ENCODE measurements at regions of chr6 and their contacts with region 1.

Region 1: GRCh38 chr6:138588805-138589434 is 89.6 kb upstream of the NHSL1 start:
- DNase-seq: peak; percentile 30
- H3K4me3 Mint-ChIP-seq: no peak overlapping the region
- H3K27ac Mint-ChIP-seq: no peak overlapping the region
- H3K4me1 Mint-ChIP-seq: peaks cover 38% of the 10 kb centered on the region
- H3K27me3 Mint-ChIP-seq: peaks cover 3% of the 10 kb centered on the region

Region 2: DNA sequence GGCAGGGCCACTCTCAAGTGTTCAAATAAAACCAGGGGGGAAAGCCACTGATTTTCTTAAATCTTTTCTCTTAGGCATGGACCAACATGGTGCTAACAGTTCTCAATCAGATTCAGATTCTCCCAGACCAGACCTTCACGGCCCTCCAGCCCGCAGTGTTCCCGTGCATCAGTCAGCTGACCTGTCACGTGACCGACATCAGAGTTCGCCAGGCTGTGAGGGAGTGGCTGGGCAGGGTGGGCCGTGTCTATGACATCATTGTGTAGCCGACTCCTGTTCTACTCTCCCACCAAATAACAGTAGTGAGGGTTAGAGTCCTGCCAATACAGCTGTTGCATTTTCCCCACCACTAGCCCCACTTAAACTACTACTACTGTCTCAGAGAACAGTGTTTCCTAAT is 252.7 kb before region 1 on chr6:
- intact Hi-C with region 1: no loop called
- DNase-seq: no peak
- H3K4me3 Mint-ChIP-seq: no peak overlapping the region
- H3K27ac Mint-ChIP-seq: no peak overlapping the region
- H3K4me1 Mint-ChIP-seq: no peaks in the 10 kb centered on the region
- H3K27me3 Mint-ChIP-seq: peaks cover 18% of the 10 kb centered on the region

Region 3: GRCh38 chr6:138428944-138429598 is 159.8 kb before region 1 on chr6:
- intact Hi-C with region 1: loop called (anchors 1 kb)
- DNase-seq: no peak
- H3K4me3 Mint-ChIP-seq: no peak overlapping the region
- H3K27ac Mint-ChIP-seq: no peak overlapping the region
- H3K4me1 Mint-ChIP-seq: no peaks in the 10 kb centered on the region
- H3K27me3 Mint-ChIP-seq: peaks cover 3% of the 10 kb centered on the region

Region 4: DNA sequence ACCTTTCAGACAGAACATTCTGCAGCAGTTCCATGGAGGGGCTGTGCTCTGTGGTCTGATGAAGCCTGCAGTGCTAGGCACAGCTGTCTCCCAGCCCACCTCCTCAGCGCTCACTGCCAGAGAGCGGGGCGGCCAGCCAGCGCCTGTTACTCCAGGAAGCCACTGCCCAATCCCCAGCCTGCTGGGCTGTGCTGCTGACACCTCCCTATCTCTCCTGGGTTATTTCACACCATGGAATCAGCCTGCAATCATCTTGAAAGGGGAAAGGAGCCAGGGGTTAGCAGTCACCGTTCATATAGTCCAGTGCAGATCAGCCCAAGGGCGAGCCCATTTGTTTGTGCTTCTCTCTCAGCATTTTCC is 43.3 kb before region 1 on chr6:
- intact Hi-C with region 1: no loop called
- DNase-seq: no peak
- H3K4me3 Mint-ChIP-seq: no peak overlapping the region
- H3K27ac Mint-ChIP-seq: no peak overlapping the region
- H3K4me1 Mint-ChIP-seq: peaks cover 16% of the 10 kb centered on the region
- H3K27me3 Mint-ChIP-seq: peaks cover 25% of the 10 kb centered on the region

Region 5: GRCh38 chr6:138654715-138655634 is 66.1 kb after region 1 on chr6:
- intact Hi-C with region 1: loop called (anchors 1 kb)
- DNase-seq: no peak
- H3K4me3 Mint-ChIP-seq: peak overlapping the region; percentile 19
- H3K27ac Mint-ChIP-seq: no peak overlapping the region
- H3K4me1 Mint-ChIP-seq: peaks cover 16% of the 10 kb centered on the region
- H3K27me3 Mint-ChIP-seq: peaks cover 26% of the 10 kb centered on the region

Region 6: GRCh38 chr6:138765896-138766655 is 177.2 kb after region 1 on chr6:
- intact Hi-C with region 1: loop called (anchors 1 kb)
- DNase-seq: no peak
- H3K4me3 Mint-ChIP-seq: no peak overlapping the region
- H3K27ac Mint-ChIP-seq: no peak overlapping the region
- H3K4me1 Mint-ChIP-seq: peaks cover 5% of the 10 kb centered on the region
- H3K27me3 Mint-ChIP-seq: no peaks in the 10 kb centered on the region

Region 7: DNA sequence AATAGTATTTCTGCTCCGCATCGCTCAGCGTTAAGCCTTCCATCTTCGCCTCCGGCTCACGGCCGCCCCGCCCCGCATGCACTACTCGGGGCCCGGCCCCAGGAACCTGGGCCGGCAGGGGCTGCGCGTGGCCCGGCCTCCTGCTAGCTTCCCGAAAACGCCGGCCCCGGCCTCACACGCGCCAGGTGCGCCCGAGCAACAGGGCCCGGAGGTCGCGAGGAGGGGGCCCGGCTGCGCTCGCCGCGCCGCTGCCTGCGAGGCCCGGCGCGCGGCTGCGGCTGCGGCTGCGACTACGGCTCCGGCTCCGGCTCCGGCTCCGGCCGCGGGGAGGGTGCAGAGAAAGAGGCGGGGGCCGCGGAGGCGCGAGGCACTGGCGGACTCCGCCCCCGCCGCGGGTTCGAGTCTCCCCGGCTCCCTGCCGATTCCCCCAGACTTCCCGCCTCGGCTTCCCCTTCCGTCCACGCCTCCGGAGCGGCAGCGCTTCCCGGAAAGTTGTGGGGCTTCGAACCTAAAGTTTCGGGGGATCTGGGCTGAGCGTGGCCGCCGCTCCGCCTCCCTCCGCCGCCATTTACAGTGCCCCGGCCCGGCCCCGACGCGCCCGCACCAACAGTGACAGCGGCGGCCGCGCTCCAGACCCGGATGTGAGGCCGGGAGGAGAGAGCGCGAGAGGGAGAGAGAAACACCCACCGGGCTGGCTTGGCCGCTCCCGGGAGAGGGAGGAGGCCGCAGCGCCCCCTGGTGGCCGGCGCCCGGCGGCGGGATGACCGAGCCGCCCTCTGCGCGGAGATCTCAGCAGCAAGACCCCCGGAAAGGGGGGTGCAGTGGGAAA is 398.9 kb after region 1 on chr6 and contains the start of gene REPS1:
- intact Hi-C with region 1: loop called (anchors 5 kb)
- DNase-seq: peak; percentile 86
- H3K4me3 Mint-ChIP-seq: peak within 1 kb of the TSS; percentile 92
- H3K27ac Mint-ChIP-seq: peak within 1 kb of the TSS; percentile 95
- H3K4me1 Mint-ChIP-seq: peaks cover 6% of the 10 kb centered on the region
- H3K27me3 Mint-ChIP-seq: peaks cover 2% of the 10 kb centered on the region
- total RNA-seq, gene REPS1: 96.3 and 99.8 TPM in 2 replicates

Region 8: GRCh38 chr6:139153855-139154254 is 564.9 kb after region 1 on chr6:
- intact Hi-C with region 1: loop called (anchors 5 kb)
- DNase-seq: no peak
- H3K4me3 Mint-ChIP-seq: peak overlapping the region; percentile 15
- H3K27ac Mint-ChIP-seq: peak overlapping the region; percentile 73
- H3K4me1 Mint-ChIP-seq: peaks cover 69% of the 10 kb centered on the region
- H3K27me3 Mint-ChIP-seq: no peaks in the 10 kb centered on the region